Activated CD4-positive, alpha-beta T cell treated with anti-CD3 and anti-CD28 coated beads for 36 hours (primary cell): ENCODE measurements at regions of chr3 and their contacts with region 1.

Region 1: GRCh38 chr3:69324362-69325025 is 61.4 kb downstream of the FRMD4B start:
- DNase-seq: peak; percentile 15
- ATAC-seq: peak; percentile 34
- H3K4me3 Mint-ChIP-seq: no peak overlapping the region
- H3K27ac Mint-ChIP-seq: peak overlapping the region; percentile 43
- H3K4me1 Mint-ChIP-seq: peaks cover 45% of the 10 kb centered on the region
- H3K27me3 Mint-ChIP-seq: no peaks in the 10 kb centered on the region

Region 2: DNA sequence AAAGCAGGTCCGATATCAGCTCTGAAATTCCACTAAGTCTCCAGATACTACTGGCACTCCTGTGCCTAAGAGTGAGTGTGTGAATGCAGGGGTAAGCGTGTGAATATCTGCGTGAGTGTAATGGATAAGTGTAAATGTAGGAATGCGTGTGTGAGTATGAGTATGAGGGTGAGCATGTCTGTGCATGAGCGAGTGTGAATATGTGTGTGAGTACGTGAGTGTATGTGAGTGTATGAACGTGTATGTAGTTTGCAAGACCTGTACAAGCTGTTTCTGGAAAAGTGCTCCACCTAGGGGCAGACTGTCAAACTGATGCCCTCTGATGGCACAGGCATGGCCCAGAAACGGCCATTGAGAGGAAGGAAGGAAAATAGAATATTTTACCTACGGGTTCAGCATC is 85.8 kb after region 1 on chr3:
- CTCF ChIA-PET with region 1: interaction called, 4 read pairs
- POLR2A ChIA-PET with region 1: no interaction called
- intact Hi-C with region 1: loop called (anchors 5 kb)
- DNase-seq: peak; percentile 82
- ATAC-seq: peak; percentile 98
- H3K4me3 Mint-ChIP-seq: no peak overlapping the region
- H3K27ac Mint-ChIP-seq: no peak overlapping the region
- H3K4me1 Mint-ChIP-seq: peaks cover 4% of the 10 kb centered on the region
- H3K27me3 Mint-ChIP-seq: peaks cover 3% of the 10 kb centered on the region

Region 3: GRCh38 chr3:69425261-69425660 is 100.8 kb after region 1 on chr3:
- CTCF ChIA-PET with region 1: no interaction called
- POLR2A ChIA-PET with region 1: no interaction called
- intact Hi-C with region 1: loop called in 1 of 2 experiments (anchors 5 kb)
- DNase-seq: peak; percentile 52
- ATAC-seq: peak; percentile 74
- H3K4me3 Mint-ChIP-seq: no peak overlapping the region
- H3K27ac Mint-ChIP-seq: no peak overlapping the region
- H3K4me1 Mint-ChIP-seq: peaks cover 2% of the 10 kb centered on the region
- H3K27me3 Mint-ChIP-seq: peaks cover 5% of the 10 kb centered on the region

Region 4: DNA sequence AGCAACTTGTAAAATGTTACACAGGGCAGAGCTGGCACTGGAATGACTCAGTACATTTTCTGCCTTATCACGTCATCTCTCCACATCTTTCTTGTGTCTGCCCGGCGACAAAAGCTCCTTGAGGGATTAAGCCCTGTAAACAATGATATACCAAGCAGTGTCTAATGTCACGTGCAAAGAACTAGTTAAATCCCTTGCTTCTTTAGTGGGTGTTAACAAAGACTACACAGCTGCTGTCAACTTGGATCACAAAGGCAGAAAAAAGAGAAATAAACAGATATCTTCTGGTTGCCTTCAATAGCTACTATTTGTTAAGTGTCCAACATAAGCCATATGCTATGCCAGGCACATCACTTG is 109.5 kb after region 1 on chr3:
- CTCF ChIA-PET with region 1: interaction called, 3 read pairs
- POLR2A ChIA-PET with region 1: no interaction called
- intact Hi-C with region 1: loop called (anchors 2 to 5 kb)
- DNase-seq: peak; percentile 26
- ATAC-seq: peak; percentile 59
- H3K4me3 Mint-ChIP-seq: no peak overlapping the region
- H3K27ac Mint-ChIP-seq: no peak overlapping the region
- H3K4me1 Mint-ChIP-seq: peaks cover 38% of the 10 kb centered on the region
- H3K27me3 Mint-ChIP-seq: peaks cover 8% of the 10 kb centered on the region

Region 5: DNA sequence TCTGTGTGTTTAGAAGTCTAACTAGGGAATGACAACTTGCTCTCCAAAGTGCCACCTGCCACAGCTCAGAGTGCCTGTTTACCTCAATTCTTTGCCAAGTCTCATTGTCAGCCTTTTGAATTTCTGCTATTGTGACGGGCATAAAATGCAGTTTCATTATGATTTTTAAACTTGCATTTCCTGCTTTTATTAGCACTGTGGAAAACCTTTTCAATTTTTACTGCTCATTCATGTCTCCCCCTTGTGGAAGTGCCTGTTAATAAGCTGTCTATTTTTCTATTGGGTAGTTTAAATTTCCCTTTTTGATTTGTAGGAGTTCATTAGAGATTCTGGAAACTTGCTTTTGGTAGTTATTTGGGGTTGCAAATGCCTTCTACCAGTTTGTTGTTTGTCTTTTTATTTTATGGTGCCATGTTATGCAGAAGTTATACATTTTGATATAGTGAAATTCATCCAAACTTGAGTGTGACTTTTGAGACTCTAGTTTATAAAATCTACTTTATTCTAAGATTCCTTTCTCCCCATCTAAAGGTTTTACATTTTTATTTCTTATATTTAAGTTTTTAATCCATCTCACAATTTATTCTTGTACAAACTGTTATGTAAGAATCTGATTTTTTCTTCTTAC is 115.3 kb after region 1 on chr3:
- CTCF ChIA-PET with region 1: interaction called, 3 read pairs
- POLR2A ChIA-PET with region 1: no interaction called
- intact Hi-C with region 1: loop called (anchors 2 to 5 kb)
- DNase-seq: no peak
- ATAC-seq: no peak
- H3K4me3 Mint-ChIP-seq: no peak overlapping the region
- H3K27ac Mint-ChIP-seq: no peak overlapping the region
- H3K4me1 Mint-ChIP-seq: peaks cover 34% of the 10 kb centered on the region
- H3K27me3 Mint-ChIP-seq: no peaks in the 10 kb centered on the region

Region 6: DNA sequence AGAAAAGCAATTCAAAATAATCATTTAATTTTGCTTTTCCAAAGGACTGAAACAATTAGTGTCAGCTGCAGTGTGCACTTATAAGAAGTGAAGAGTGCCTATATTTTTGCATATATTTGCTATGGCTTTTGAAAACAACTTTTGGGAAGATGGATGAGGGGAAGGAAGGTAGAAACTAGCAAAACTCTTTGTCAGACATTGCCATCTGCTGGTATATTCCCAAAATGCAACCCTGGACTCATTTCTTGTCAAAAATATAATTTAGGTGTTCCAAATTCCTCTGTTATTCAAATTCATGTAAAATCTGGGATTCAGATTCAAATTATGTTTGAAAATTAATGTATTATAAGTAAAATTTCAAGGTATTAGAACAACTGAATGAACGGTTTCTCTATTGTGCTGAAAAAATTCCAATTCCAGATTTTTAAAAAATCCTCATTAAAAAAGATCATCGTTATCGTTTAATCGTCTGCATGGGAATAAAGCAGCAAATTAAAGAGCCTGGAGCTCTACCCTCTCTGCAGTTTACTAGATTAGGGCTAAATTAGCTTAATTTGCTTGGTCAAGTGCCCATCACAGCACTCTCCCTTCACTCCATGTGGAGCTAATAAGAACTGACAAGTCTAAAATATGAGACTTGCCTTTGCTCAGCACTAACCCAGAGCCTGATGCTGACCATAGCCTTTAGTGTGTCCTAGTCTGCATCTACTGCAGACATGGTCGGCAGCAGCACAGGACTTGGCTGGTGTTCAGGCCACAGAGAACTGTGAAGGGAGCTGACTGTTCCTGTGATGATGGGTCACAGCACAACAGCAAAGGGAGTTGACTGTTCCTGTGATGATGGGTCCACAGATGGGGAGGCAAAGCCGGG is 346.8 kb after region 1 on chr3:
- CTCF ChIA-PET with region 1: no interaction called
- POLR2A ChIA-PET with region 1: no interaction called
- intact Hi-C with region 1: loop called in 1 of 2 experiments (anchors 1 kb)
- DNase-seq: peak; percentile 11
- ATAC-seq: no peak
- H3K4me3 Mint-ChIP-seq: no peak overlapping the region
- H3K27ac Mint-ChIP-seq: no peak overlapping the region
- H3K4me1 Mint-ChIP-seq: no peaks in the 10 kb centered on the region
- H3K27me3 Mint-ChIP-seq: no peaks in the 10 kb centered on the region

Region 7: DNA sequence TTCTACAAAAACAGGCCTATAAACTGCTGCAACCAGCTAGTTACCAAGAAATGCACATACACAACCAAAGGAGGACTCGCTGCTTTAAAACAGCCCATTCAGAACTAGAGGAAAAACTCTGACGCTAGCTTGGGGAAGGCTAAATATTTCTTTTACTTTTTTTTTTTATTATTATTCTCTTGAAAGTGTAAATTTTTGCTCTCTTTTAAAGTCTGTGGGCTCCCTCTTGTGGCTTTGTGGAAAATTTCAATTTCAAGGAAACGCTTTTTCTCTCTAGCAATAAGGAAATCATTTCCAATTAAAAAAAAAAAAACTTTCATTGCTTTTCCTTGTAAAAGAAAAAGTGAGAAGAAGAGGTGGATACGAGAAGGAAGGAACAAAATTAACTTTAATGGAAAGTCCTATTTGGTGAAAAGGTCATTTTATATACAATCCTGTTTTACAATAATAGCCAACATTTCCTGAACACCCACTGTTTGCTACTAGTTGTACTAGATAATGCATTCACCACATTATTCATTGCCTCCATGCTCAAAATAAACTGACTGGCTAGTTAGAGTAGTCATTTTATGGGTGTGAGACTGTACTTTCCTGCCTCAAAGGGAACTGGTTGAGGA is 623.9 kb after region 1 on chr3:
- CTCF ChIA-PET with region 1: no interaction called
- POLR2A ChIA-PET with region 1: no interaction called
- intact Hi-C with region 1: loop called in 1 of 2 experiments (anchors 5 kb)
- DNase-seq: no peak
- ATAC-seq: no peak
- H3K4me3 Mint-ChIP-seq: no peak overlapping the region
- H3K27ac Mint-ChIP-seq: no peak overlapping the region
- H3K4me1 Mint-ChIP-seq: no peaks in the 10 kb centered on the region
- H3K27me3 Mint-ChIP-seq: peaks cover 2% of the 10 kb centered on the region

Region 8: GRCh38 chr3:69961706-69962439 is 637.4 kb after region 1 on chr3:
- CTCF ChIA-PET with region 1: no interaction called
- POLR2A ChIA-PET with region 1: no interaction called
- intact Hi-C with region 1: no loop called
- DNase-seq: no peak
- ATAC-seq: no peak
- H3K4me3 Mint-ChIP-seq: no peak overlapping the region
- H3K27ac Mint-ChIP-seq: no peak overlapping the region
- H3K4me1 Mint-ChIP-seq: no peaks in the 10 kb centered on the region
- H3K27me3 Mint-ChIP-seq: peaks cover 2% of the 10 kb centered on the region